Breast epithelium (tissue), 4 donors: ENCODE measurements at regions of chr12 and their contacts with region 1.

Region 1: DNA sequence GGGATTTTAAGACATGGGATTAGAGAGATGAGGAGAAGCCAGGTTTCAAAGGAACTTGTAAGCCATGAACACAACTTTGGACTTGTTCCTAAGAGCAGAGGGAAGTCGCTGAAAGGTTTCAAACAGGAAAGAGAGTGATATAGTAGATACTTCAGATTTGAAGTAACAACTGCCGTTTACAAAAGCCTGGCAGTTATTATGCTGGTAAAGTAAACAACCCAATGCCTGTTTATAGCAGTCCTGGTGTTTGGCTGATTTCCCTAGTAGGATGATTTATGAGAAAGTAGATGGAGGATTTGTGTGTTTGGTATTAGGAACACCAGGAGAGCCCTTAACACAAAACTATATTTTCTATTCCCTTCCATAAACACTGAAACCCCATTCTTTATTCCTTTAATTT is 285.7 kb downstream of the RMST start:
- DNase-seq: no peak
- H3K4me3 ChIP-seq: no peak overlapping the region
- H3K27ac ChIP-seq: no peak overlapping the region
- H3K4me1 ChIP-seq: no peaks in the 10 kb centered on the region
- H3K27me3 ChIP-seq: no peaks in the 10 kb centered on the region
- CTCF ChIP-seq: no peak
- POLR2A ChIP-seq: no peak

Region 2: DNA sequence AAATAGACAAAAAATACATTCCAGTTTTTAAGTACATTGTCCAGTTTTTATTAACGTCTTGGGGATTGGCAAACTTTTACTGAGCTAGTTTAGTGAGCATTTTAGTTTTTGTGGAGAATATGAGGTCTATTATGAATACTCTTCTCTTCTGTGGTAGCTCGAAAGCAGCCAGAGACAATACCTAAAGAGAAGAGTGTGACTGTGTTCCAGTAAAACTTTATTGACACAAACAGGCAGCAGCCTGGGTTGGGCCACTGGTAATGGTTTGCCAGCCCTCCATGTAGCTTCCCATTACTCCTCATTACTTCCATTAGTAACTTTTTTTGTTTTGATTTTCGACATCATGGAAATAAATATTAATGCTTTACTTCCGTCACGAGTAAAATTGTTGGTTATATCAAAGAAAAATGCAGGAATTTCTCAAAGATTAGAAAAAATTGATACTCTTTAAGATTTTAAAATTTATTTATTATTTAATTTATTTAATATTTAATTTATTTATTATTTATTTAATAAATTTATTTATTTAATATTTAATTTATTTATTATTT is 266.1 kb before region 1 on chr12:
- intact Hi-C with region 1: loop called (anchors 5 kb)
- DNase-seq: no peak
- H3K4me3 ChIP-seq: no peak overlapping the region
- H3K27ac ChIP-seq: no peak overlapping the region
- H3K4me1 ChIP-seq: no peaks in the 10 kb centered on the region
- H3K27me3 ChIP-seq: no peaks in the 10 kb centered on the region
- CTCF ChIP-seq: no peak
- POLR2A ChIP-seq: no peak

Region 3: GRCh38 chr12:97568458-97569180 is 179.7 kb before region 1 on chr12:
- intact Hi-C with region 1: no loop called
- DNase-seq: peak in 1 of 2 donors; percentile 37
- H3K4me3 ChIP-seq: no peak overlapping the region
- H3K27ac ChIP-seq: peak overlapping the region; percentile 16 to 69
- H3K4me1 ChIP-seq: no peaks in the 10 kb centered on the region
- H3K27me3 ChIP-seq: no peaks in the 10 kb centered on the region
- CTCF ChIP-seq: no peak
- POLR2A ChIP-seq: no peak

Region 4: DNA sequence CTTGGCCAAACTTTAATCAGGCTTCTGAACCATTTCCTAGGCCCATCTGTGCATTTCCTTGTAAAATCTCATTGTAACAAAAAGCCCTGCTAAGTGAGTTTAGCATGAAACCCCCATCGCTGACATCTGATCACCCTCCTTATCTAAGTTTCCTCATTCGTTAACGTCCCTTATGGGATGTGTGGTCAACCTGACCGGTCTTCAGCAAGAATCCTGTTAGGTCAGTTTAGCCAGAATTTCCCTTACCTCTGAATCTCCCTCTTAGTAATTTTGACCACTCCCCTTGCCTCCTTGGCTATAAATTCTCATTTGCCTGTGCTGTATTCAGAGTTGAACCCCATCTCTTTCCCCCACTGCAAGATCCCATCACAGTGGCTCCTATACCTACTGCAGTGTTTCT is 46.4 kb before region 1 on chr12:
- intact Hi-C with region 1: no loop called
- DNase-seq: no peak
- H3K4me3 ChIP-seq: no peak overlapping the region
- H3K27ac ChIP-seq: no peak overlapping the region
- H3K4me1 ChIP-seq: no peaks in the 10 kb centered on the region
- H3K27me3 ChIP-seq: no peaks in the 10 kb centered on the region
- CTCF ChIP-seq: no peak
- POLR2A ChIP-seq: no peak